GM12878 (cell line): ENCODE measurements at regions of chr3 and their contacts with region 1.

Region 1: DNA sequence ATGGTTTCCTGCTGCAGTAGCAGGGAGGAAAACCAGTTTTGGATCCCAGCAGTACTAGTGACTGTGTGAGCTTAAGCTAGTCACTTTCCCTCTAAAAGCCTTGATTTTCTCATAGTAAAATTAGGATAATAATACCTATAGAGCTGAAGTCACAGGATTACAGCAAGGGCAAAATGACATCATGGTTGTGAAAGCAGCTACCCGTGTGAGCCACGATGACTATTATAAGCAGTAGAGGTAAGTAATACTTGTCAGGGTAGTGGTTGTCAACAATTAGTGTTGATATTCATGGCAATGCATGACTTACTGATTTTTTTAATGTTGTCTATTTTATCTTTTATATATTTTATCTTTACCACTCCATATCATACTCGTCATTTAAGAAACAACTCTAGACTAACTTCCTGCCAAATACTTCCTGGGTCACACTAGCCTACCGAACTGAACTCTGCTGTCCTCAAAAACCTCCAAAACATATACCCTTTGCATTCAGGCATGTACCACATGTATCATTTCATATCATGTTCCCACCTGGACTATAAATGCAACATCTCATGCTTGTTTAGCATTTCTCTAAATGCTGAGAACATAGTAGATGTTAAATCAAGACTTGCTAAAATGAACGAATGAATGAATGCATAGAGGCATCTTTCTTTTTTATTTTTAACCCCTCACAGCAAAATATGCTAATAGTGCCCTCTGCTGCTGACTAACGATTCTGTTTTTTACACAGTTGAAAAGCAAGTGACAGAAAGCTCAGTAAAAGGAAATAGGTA is 172.6 kb downstream of the P3H2 start:
- DNase-seq: peak; percentile 32
- ATAC-seq: peak; percentile 76
- H3K4me3 ChIP-seq: no peak overlapping the region
- H3K27ac ChIP-seq: no peak overlapping the region
- H3K4me1 ChIP-seq: peaks cover 3% of the 10 kb centered on the region; the same call in 1 of the 2 replicates
- H3K27me3 ChIP-seq: no peaks in the 10 kb centered on the region; a peak in 1 of 4 replicates
- CTCF ChIP-seq: peak; percentile 55 to 69 (median 60); a peak in 5 of 6 replicates
- EP300 ChIP-seq: no peak
- POLR2A ChIP-seq: no peak
- RAD21 ChIP-seq: peak; percentile 92

Region 2: DNA sequence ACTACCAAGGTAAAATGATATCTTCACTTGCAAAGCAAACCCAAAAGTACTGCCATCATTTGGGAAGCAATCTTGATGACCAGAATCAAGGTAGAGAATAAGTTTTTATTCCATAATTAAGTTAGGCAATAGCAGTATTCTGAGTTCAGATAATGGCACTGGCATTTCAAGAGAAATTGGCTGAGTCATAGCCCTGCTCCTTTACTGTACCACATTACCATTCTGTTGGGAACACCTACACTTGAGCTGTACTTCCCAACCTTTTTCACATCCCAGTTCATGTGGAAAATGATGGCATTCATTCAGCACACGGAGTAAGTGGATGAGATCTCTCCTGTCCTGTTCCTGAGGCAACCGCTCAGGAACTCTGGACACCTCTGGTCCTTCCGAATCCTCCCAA is 1088.0 kb before region 1 on chr3:
- CTCF ChIA-PET with region 1: no interaction called
- POLR2A ChIA-PET with region 1: no interaction called
- RAD21 ChIA-PET with region 1: no interaction called
- SMC1A ChIA-PET with region 1: no interaction called
- in situ Hi-C with region 1: no loop called
- intact Hi-C with region 1: no loop called
- DNase-seq: no peak
- ATAC-seq: no peak
- H3K4me3 ChIP-seq: no peak overlapping the region
- H3K27ac ChIP-seq: no peak overlapping the region
- H3K4me1 ChIP-seq: no peaks in the 10 kb centered on the region
- H3K27me3 ChIP-seq: no peaks in the 10 kb centered on the region; a peak in 2 of 4 replicates
- CTCF ChIP-seq: no peak
- EP300 ChIP-seq: no peak
- POLR2A ChIP-seq: no peak
- RAD21 ChIP-seq: no peak

Region 3: GRCh38 chr3:189288348-189289235 is 659.5 kb before region 1 on chr3:
- CTCF ChIA-PET with region 1: interaction called, 4 read pairs
- POLR2A ChIA-PET with region 1: interaction called, 3 read pairs
- RAD21 ChIA-PET with region 1: interaction called, 6 read pairs
- SMC1A ChIA-PET with region 1: interaction called, 12 read pairs
- in situ Hi-C with region 1: no loop called
- intact Hi-C with region 1: no loop called
- DNase-seq: peak; percentile 73
- ATAC-seq: peak; percentile 90
- H3K4me3 ChIP-seq: peak overlapping the region; percentile 60
- H3K27ac ChIP-seq: peak overlapping the region; percentile 72
- H3K4me1 ChIP-seq: peaks cover 31% of the 10 kb centered on the region
- H3K27me3 ChIP-seq: peaks cover 0 to 2% of the 10 kb centered on the region in 2 experiments; a peak in 1 of 4 replicates
- CTCF ChIP-seq: no peak
- EP300 ChIP-seq: peak; percentile 58 to 70; a peak in 3 of 4 replicates
- POLR2A ChIP-seq: no peak
- RAD21 ChIP-seq: peak; percentile 10; the same call in 1 of the 2 replicates

Region 4: DNA sequence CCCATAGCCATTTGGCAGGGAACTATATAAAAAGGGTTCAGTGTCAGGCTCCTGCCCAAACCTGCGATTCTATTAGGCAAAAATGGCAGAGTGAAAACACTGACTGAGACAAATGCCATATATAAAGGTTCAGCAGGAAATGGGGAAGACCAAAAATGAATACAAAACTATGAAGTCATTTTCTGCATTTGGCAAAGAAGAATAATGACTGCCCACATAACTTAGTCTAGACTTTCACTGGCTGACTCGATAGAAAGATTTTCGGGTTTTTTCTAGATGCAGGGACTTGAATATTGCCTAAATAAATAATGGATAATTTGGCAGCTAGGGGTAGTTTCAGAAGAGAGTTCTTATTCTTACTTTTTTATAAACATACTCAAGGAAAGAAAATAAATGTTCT is 598.4 kb before region 1 on chr3:
- CTCF ChIA-PET with region 1: interaction called, 15 read pairs
- POLR2A ChIA-PET with region 1: no interaction called
- RAD21 ChIA-PET with region 1: interaction called, 7 read pairs
- SMC1A ChIA-PET with region 1: interaction called, 26 read pairs
- in situ Hi-C with region 1: no loop called
- intact Hi-C with region 1: no loop called
- DNase-seq: no peak
- ATAC-seq: peak; percentile 76
- H3K4me3 ChIP-seq: no peak overlapping the region
- H3K27ac ChIP-seq: no peak overlapping the region
- H3K4me1 ChIP-seq: peaks cover 9% of the 10 kb centered on the region
- H3K27me3 ChIP-seq: no peaks in the 10 kb centered on the region
- CTCF ChIP-seq: no peak
- EP300 ChIP-seq: no peak
- POLR2A ChIP-seq: no peak
- RAD21 ChIP-seq: no peak

Region 5: DNA sequence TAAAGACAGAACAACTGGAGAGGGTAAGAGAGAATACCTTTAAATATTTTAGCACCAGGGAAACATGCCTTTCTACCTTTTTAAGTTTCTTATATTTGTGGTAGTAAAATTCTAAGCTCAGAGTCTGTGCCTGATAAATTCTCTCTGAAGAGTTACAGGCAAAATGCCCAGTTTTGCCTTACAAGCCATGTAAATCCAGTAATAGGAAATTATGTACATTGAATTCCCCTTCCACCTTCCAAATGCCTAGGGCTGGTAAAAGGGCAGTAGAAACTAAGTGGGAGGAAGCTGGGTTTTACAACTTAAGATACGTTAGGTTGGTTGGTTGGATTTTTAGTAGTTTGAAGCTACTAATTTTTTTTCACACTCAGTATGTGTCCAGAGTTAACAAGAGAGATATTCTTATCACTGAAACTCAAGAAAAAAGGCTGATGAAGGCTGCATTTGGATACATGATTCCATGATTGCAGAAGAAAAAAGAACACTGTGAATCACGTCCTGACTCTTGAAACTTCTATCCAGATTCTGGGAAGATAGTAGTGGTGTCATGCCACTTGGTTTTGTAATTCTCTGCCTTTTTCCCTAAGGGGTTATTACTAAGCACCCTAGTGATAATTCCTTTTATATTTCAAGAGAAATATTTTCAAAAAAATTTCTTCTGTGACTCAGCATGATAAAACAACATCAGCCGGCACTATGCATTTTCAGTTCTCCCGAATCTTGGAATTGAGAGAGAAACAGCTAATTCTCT is 359.9 kb before region 1 on chr3:
- CTCF ChIA-PET with region 1: interaction called, 10 read pairs
- POLR2A ChIA-PET with region 1: no interaction called
- RAD21 ChIA-PET with region 1: interaction called, 4 read pairs
- SMC1A ChIA-PET with region 1: no interaction called
- in situ Hi-C with region 1: no loop called
- intact Hi-C with region 1: no loop called
- DNase-seq: no peak
- ATAC-seq: no peak
- H3K4me3 ChIP-seq: no peak overlapping the region
- H3K27ac ChIP-seq: 0 out of 2 replicates have a peak overlapping the region, but pooled peaks have one; percentile 26
- H3K4me1 ChIP-seq: peaks cover 18% of the 10 kb centered on the region
- H3K27me3 ChIP-seq: no peaks in the 10 kb centered on the region
- CTCF ChIP-seq: no peak
- EP300 ChIP-seq: no peak
- POLR2A ChIP-seq: no peak
- RAD21 ChIP-seq: no peak